H1 (cell line): ENCODE measurements at regions of chr2 and their contacts with region 1.

Region 1: DNA sequence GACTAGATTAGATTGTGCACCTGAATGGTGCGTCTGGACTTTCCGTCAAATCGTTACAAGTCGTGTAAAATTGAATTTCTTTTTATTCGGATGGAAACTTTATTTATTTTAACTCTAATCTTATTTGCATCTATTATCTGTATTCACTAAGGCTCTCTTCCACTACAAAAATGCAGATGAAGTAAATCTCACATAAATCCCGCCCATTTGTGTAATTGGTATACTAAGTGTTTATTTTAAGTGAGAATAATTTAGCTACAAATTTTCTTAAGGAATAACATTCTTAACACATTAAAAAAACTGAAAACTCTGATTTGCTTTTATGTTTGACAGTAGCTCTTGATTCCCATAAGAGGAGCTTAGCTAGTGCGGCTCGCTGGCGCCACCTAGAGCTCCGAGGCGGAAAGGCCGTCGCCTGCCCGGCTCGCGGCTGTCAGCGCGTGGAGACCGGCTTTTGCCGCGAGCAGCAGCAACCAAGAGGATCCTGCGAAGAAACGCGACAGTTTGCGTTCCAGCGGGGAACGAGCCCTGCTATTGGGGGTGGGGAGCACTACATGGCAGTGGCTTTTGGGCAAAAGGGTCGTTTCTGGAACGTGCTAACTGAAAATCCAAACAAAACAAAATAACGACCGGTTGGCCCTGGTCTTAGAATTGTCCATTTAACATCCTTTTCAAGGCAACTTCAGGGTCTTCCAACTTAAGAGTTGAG is 6.7 kb downstream of the SP9 start:
- DNase-seq: peak in 1 of 2 experiments; percentile 97
- H3K4me3 ChIP-seq: peak overlapping the region in 3 of 4 experiments; percentile 20 to 63 (median 35); a peak in 6 of 8 replicates
- H3K27ac ChIP-seq: no peak overlapping the region
- H3K4me1 ChIP-seq: peaks cover 6 to 18% (median 12%) of the 10 kb centered on the region in 4 experiments; a peak in 6 of 7 replicates
- H3K27me3 ChIP-seq: peaks cover 40 to 92% (median 73%) of the 10 kb centered on the region in 4 experiments
- CTCF ChIP-seq: peak in 2 of 3 experiments; percentile 89 to 91; a peak in 3 of 4 replicates
- EP300 ChIP-seq: no peak
- POLR2A ChIP-seq: no peak
- RAD21 ChIP-seq: peak; percentile 95

Region 2: GRCh38 chr2:174153757-174154680 is 187.4 kb before region 1 on chr2:
- CTCF ChIA-PET with region 1: interaction called, 19 read pairs
- POLR2A ChIA-PET with region 1: no interaction called
- DNase-seq: no peak
- H3K4me3 ChIP-seq: no peak overlapping the region
- H3K27ac ChIP-seq: no peak overlapping the region
- H3K4me1 ChIP-seq: no peaks in the 10 kb centered on the region
- H3K27me3 ChIP-seq: no peaks in the 10 kb centered on the region
- CTCF ChIP-seq: no peak
- EP300 ChIP-seq: no peak
- POLR2A ChIP-seq: no peak
- RAD21 ChIP-seq: no peak

Region 3: DNA sequence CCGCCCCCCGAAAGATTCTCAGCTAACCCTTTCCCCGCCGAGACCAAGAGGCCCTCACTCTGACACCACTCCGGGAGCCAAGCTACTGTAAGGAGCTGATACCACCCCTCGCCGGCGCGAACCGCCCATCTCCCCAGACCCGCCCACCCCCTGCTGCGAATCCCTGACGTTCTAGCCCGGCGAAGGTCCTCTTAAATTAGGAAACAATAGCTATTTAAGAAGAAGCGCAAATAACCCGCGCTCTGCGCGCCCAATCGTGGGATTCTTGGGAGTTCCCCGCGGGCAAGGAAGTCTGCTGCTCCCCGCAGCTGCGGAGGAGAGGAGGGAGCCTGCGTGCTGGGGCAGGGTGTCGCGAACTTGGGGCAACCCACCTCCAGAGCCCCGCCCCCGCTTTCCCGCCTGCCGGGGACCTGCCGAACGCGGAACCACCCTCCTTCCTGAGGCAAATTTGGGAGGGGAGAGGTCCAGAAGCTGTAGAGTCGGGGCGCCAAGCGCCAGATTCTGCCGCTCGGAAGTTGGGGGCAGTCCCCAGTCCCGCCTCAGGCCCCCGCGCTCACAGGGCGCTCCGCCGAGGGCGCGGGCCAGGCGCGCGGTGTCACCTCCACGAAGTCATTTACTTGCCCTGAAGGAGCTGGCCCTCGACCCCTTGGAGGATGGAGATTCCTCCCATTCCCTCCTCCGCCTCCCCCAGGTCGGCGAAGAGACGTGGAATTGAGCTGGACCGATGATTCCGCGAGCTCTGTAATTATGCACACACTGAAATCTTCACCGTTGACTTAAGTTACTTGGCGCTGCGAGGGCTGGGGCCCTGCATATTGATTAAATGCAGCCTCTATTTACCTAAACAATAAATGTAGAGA is 15.0 kb before region 1 on chr2:
- CTCF ChIA-PET with region 1: interaction called, 25 read pairs
- POLR2A ChIA-PET with region 1: interaction called, 7 read pairs
- DNase-seq: peak in 1 of 2 experiments; percentile 84
- H3K4me3 ChIP-seq: peak overlapping the region; percentile 41 to 72 (median 66)
- H3K27ac ChIP-seq: no peak overlapping the region
- H3K4me1 ChIP-seq: peaks cover 9 to 20% (median 11%) of the 10 kb centered on the region in 4 experiments
- H3K27me3 ChIP-seq: peaks cover 50 to 72% (median 62%) of the 10 kb centered on the region in 4 experiments
- CTCF ChIP-seq: no peak
- EP300 ChIP-seq: no peak
- POLR2A ChIP-seq: no peak
- RAD21 ChIP-seq: no peak

Region 4: GRCh38 chr2:174450021-174450816 is 108.8 kb after region 1 on chr2:
- CTCF ChIA-PET with region 1: no interaction called
- POLR2A ChIA-PET with region 1: no interaction called
- DNase-seq: no peak
- H3K4me3 ChIP-seq: no peak overlapping the region
- H3K27ac ChIP-seq: no peak overlapping the region
- H3K4me1 ChIP-seq: peaks cover 0 to 1% (median 0%) of the 10 kb centered on the region in 4 experiments; a peak in 1 of 7 replicates
- H3K27me3 ChIP-seq: no peaks in the 10 kb centered on the region
- CTCF ChIP-seq: no peak
- EP300 ChIP-seq: no peak
- POLR2A ChIP-seq: no peak
- RAD21 ChIP-seq: no peak